ENCODE measurements at regions of chr16 and their contacts with region 1.

Region 1: DNA sequence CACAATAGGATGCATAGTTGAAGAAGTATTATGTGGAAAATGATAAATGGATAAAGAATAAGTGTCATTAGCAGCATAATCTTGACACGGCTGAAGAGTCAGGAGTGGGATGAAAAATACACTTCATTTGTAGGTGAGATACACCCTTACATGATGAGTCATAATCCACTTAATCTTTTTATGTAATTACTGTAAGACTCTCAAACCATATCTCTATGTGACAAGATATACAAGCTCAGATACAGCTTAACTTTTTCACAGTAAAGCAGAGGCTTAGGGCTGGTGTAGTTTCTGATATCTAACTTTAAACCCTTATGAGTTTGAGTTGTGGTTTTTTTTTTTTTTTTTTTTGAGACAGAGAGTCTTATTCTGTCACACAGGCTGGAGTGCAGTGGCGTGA is 101.2 kb downstream of the FTO start:
- DNase-seq: no peak
- H3K4me3 ChIP-seq: no peak overlapping the region
- H3K27ac ChIP-seq: no peak overlapping the region
- H3K4me1 ChIP-seq: peaks cover 4% of the 10 kb centered on the region; the same call in 1 of the 2 replicates
- H3K27me3 ChIP-seq: no peaks in the 10 kb centered on the region
- CTCF ChIP-seq: no peak

Region 2: GRCh38 chr16:53836142-53836541 is 31.0 kb after region 1 on chr16:
- CTCF ChIA-PET with region 1: no interaction called
- POLR2A ChIA-PET with region 1: interaction called, 19 read pairs
- intact Hi-C with region 1: no loop called
- DNase-seq: no peak
- H3K4me3 ChIP-seq: no peak overlapping the region
- H3K27ac ChIP-seq: no peak overlapping the region
- H3K4me1 ChIP-seq: no peaks in the 10 kb centered on the region
- H3K27me3 ChIP-seq: no peaks in the 10 kb centered on the region
- CTCF ChIP-seq: no peak